ENCODE measurements at regions of chr2 and their contacts with region 1.

Region 1: GRCh38 chr2:195656859-195657633 is at the start of gene SLC39A10:
- H3K4me3 Mint-ChIP-seq: peak within 1 kb of the TSS; percentile 93
- H3K27ac Mint-ChIP-seq: peak within 1 kb of the TSS; percentile 94
- H3K4me1 Mint-ChIP-seq: peaks cover 23% of the 10 kb centered on the region
- H3K27me3 Mint-ChIP-seq: no peaks in the 10 kb centered on the region

Region 2: DNA sequence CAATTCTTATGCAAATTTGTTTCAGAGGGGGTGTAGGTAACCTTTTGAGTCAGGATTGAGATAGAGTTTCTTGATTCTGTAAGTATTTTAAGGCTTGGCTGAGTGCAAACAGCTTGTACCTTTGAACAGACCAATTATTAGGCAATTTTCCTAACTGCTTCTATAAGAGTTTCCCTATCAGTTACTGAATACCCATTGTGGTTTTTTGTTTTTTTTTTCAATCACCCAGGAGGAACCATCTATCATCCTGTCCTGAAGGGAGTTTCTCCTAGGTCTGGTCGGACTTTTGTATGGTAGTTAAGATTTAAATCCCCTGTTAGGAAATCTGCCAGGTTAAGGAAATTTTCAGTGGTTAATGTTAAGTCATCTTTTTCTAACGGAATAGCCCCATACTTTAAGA is 319.4 kb before region 1 on chr2:
- intact Hi-C with region 1: loop called (anchors 10 kb)
- H3K4me3 Mint-ChIP-seq: no peak overlapping the region
- H3K27ac Mint-ChIP-seq: no peak overlapping the region
- H3K4me1 Mint-ChIP-seq: peaks cover 16% of the 10 kb centered on the region
- H3K27me3 Mint-ChIP-seq: no peaks in the 10 kb centered on the region

Region 3: DNA sequence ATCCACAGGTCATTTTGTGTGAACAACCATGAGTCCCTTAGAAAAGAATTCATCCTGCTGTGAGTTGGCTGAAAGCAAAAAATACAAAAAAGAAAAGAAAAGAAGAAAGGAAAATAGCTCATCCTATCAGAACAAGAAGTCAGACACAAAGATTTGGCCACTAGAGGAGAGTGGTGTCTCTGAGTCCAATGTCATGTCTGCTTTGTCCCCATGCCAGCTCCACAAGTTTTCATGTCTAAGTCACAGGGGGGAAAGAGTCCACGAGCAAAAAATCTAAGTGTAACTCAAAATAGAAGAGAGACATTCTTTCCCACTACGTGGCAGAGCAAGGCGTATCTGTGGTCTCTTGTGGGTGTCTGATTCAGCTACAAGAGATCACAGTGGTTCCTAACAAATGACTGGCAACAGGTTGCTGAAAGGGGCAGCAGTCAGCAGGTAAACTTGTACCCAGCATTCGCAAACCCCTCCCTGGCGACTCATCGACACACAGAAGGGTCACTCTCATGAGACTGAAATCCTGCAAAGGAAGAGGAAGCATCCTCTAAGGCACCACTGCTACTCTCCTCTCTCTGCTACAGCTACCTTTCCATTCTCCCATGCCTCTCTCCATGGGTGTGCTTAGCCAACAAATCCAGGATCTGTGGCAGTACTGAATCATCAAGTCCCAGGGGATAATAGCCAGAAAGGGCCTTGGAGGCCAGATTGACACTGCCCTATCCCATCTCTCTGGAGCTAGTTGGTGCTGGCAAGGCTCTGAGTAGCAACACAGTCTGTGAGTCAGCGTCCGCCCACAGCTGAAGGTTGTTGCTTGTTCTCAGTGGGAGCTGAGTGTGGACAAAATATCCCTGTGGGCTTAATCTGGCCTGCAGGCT is 123.0 kb before region 1 on chr2:
- intact Hi-C with region 1: loop called (anchors 2 kb)
- H3K4me3 Mint-ChIP-seq: no peak overlapping the region
- H3K27ac Mint-ChIP-seq: peak overlapping the region; percentile 79
- H3K4me1 Mint-ChIP-seq: peaks cover 61% of the 10 kb centered on the region
- H3K27me3 Mint-ChIP-seq: no peaks in the 10 kb centered on the region

Region 4: DNA sequence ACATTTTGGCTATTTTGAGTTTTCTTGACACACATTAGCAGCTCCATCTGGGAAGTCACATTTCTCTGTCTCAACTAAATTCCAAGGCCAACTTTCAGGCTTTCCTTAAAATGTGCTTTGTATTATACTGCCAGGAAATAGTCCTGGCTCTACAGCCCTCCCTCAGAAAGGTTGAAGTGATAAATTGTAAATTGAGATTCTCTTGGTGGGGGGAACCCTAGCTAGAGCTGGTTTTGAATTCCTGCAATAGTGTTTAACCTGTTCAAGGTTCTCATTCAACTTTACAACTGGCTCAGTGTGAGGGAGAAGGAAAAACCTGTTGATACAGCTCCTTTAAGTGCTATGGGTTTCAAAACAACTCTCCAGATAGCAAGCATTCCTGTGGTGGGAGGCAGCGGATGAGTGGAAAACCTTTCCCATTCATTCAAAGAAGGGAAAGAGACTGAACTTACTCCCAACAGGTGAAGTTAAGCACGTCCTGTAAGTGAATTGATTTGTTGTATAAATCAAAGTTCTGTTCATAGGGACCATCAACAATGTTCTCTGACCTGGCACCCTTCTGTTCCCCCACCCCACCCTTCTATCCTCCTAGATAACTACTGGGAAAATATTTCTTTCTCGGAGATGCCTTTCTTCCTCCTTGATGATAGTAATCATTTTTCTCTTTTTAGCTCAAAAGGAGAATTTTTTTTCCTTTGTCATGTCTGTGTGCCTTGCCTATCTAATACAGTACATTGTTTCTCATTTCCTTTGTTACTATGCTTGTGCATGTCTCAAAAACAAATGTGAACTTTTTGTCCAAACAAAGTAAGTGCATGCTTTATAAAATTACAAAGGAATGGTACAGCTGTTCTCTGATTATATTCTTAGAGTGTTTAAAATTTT is 44.2 kb before region 1 on chr2:
- intact Hi-C with region 1: loop called (anchors 5 kb)
- H3K4me3 Mint-ChIP-seq: no peak overlapping the region
- H3K27ac Mint-ChIP-seq: peak overlapping the region; percentile 46
- H3K4me1 Mint-ChIP-seq: peaks cover 24% of the 10 kb centered on the region
- H3K27me3 Mint-ChIP-seq: no peaks in the 10 kb centered on the region

Region 5: GRCh38 chr2:196068271-196069209 is 411.5 kb after region 1 on chr2 and contains the start of gene DNAH7:
- intact Hi-C with region 1: loop called (anchors 2 kb)
- H3K4me3 Mint-ChIP-seq: peak within 1 kb of the TSS; percentile 89
- H3K27ac Mint-ChIP-seq: peak within 1 kb of the TSS; percentile 88
- H3K4me1 Mint-ChIP-seq: no peaks in the 10 kb centered on the region
- H3K27me3 Mint-ChIP-seq: no peaks in the 10 kb centered on the region

Measured in dendritic cell treated with granulocyte-macrophage colony-stimulating factor and Interleukin-4, amounts not matched to agents 40 ng/mL and 50 ng/mL, for 4 days (primary cell).